Prostate gland (tissue), 2 donors: ENCODE measurements at regions of chr7 and their contacts with region 1.

Region 1: DNA sequence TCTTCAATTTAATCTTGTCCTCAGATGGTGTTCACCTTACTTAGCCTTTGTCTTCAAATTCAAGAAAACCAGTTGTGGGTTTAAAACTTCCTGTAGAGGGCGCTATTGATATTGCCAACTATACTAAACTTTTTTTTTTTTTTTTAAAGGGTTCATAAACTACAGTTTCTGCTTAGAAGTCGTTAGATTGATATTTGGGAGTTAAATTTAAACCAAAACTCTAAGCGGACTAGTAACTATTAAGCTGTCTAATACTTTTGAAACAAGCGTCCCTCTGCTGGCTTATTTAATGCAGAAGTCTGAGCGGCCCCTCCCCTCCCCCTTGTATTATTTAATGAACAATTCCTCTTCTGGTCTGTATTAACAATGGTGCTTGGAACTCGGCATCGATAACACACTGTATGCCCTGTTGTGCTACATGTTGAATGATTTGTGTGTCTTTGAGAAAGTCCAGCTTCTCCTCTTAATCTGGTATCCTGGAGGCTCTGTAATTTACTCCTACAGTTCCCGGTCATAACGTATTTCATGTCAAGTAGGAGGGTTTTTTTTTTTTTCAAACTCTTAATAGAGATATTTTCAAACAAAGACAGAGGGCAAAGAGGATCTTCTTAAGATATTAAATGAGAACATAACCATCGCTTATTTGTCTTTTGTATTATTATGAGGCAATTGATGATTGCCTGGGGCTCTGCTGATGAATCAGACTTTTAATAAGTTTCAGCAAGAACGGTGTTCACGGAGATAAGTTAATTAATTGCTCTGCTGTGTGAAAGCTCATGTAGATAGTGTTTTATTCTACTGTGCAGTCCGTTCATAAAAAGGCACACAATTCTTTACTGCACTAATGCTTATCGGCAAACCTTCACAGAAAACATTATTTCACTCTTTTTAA is 22.6 kb upstream of the CREB5 start:
- DNase-seq: peak; percentile 33
- H3K4me3 ChIP-seq: peak overlapping the region in 1 of 2 donors; percentile 7
- H3K27ac ChIP-seq: no peak overlapping the region
- H3K4me1 ChIP-seq: no peaks in the 10 kb centered on the region
- H3K27me3 ChIP-seq: no peaks in the 10 kb centered on the region
- CTCF ChIP-seq: peak; percentile 67 to 82 (median 74)
- POLR2A ChIP-seq: no peak

Region 2: GRCh38 chr7:28626624-28627262 is 237.0 kb after region 1 on chr7:
- intact Hi-C with region 1: loop called (anchors 5 kb)
- DNase-seq: no peak
- H3K4me3 ChIP-seq: no peak overlapping the region
- H3K27ac ChIP-seq: no peak overlapping the region
- H3K4me1 ChIP-seq: no peaks in the 10 kb centered on the region
- H3K27me3 ChIP-seq: no peaks in the 10 kb centered on the region
- CTCF ChIP-seq: peak in 3 of 4 experiments; percentile 43 to 61 (median 47)
- POLR2A ChIP-seq: no peak